ENCODE measurements at regions of chr4 and their contacts with region 1.

Region 1: GRCh38 chr4:131566026-131566425 is 1583.1 kb upstream of the PCDH10 start:
- DNase-seq: no peak
- H3K4me3 ChIP-seq: no peak overlapping the region
- H3K27ac ChIP-seq: no peak overlapping the region
- H3K27me3 ChIP-seq: no peaks in the 10 kb centered on the region
- CTCF ChIP-seq: no peak

Region 2: DNA sequence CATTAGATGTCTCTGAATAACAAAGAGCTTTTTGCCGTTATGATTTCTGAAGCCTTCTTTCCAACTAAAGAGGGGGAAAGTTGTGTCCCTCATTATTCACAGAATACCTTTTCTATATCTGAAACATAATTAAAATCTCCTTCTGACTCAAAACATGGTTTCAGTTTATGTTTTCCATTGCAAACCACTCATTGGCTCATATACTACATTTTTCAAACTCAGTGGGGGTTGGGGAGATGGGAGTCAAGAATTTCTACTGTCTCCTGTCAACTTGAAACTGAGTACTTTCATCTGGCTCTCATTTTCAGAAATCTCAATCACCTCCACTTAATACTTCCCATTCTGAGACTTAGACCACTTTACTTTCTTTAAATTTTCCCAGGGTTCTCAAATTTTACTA is 256.4 kb before region 1 on chr4:
- intact Hi-C with region 1: loop called in 1 of 2 experiments (anchors 5 kb)
- DNase-seq: no peak
- H3K4me3 ChIP-seq: no peak overlapping the region
- H3K27ac ChIP-seq: no peak overlapping the region
- H3K27me3 ChIP-seq: no peaks in the 10 kb centered on the region
- CTCF ChIP-seq: no peak

Region 3: DNA sequence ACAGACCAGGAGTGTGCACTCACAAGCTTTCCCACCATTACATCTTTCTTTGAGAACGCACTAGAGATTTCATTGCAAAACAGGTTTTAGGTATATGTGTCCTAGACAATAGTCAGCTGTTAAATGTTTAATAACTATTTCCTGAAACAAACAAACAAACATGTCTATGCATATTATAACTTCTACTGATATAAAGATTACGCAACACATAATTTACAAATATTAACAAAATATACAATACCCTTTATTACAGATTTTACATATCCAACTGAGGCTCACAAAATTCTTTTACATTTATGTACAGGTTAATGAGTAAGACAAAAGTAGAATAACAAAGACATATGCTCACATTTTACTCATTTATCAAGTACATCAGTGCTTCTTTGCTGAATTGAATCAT is 29.1 kb after region 1 on chr4:
- intact Hi-C with region 1: no loop called
- DNase-seq: no peak
- H3K4me3 ChIP-seq: no peak overlapping the region
- H3K27ac ChIP-seq: no peak overlapping the region
- H3K27me3 ChIP-seq: no peaks in the 10 kb centered on the region
- CTCF ChIP-seq: no peak

Region 4: GRCh38 chr4:131721883-131722282 is 155.9 kb after region 1 on chr4:
- intact Hi-C with region 1: no loop called
- DNase-seq: no peak
- H3K4me3 ChIP-seq: no peak overlapping the region
- H3K27ac ChIP-seq: no peak overlapping the region
- H3K27me3 ChIP-seq: no peaks in the 10 kb centered on the region
- CTCF ChIP-seq: no peak

Region 5: DNA sequence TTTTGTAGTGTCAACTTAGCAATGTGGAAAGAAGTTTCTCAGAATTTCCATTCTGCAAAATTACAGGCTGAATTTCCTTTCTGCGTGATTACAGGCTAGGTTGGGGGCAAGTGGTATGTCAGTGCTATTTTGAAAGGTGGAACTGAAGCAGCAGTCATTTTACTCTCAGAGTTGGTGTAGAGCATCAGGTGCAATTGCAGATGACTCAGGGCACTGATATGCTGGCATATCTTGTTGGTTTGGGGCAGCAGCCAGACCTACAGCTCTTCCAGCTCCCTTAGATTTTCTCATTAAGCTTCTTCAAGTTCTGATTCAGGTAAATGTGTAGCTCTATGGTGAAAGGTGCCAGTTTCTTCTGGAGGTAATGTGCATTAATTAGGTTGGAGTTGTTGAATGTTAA is 652.4 kb after region 1 on chr4:
- intact Hi-C with region 1: no loop called
- DNase-seq: no peak
- H3K4me3 ChIP-seq: no peak overlapping the region
- H3K27ac ChIP-seq: no peak overlapping the region
- H3K27me3 ChIP-seq: no peaks in the 10 kb centered on the region
- CTCF ChIP-seq: no peak

Measured in dorsolateral prefrontal cortex (tissue), 120 donors.